ENCODE measurements at regions of chr9 and their contacts with region 1.

Region 1: GRCh38 chr9:2087500-2088313 is 72.6 kb downstream of the SMARCA2 start:
- DNase-seq: peak; percentile 65
- ATAC-seq: peak; percentile 78
- H3K4me3 ChIP-seq: no peak overlapping the region
- H3K4me3 Mint-ChIP-seq: no peak overlapping the region
- H3K27ac ChIP-seq: no peak overlapping the region
- H3K27ac Mint-ChIP-seq: no peak overlapping the region
- H3K4me1 ChIP-seq: no peaks in the 10 kb centered on the region
- H3K4me1 Mint-ChIP-seq: no peaks in the 10 kb centered on the region
- H3K27me3 ChIP-seq: no peaks in the 10 kb centered on the region
- H3K27me3 Mint-ChIP-seq: no peaks in the 10 kb centered on the region
- CTCF ChIP-seq: peak; percentile 87

Region 2: GRCh38 chr9:893843-894420 is 1193.8 kb before region 1 on chr9:
- CTCF ChIA-PET with region 1: no interaction called
- POLR2A ChIA-PET with region 1: no interaction called
- intact Hi-C with region 1: loop called (anchors 5 kb)
- DNase-seq: peak; percentile 76
- ATAC-seq: peak; percentile 95
- H3K4me3 ChIP-seq: no peak overlapping the region
- H3K4me3 Mint-ChIP-seq: no peak overlapping the region
- H3K27ac ChIP-seq: no peak overlapping the region
- H3K27ac Mint-ChIP-seq: peak overlapping the region; percentile 26
- H3K4me1 ChIP-seq: peaks cover 13 to 16% of the 10 kb centered on the region in 2 donors
- H3K4me1 Mint-ChIP-seq: peaks cover 15% of the 10 kb centered on the region
- H3K27me3 ChIP-seq: no peaks in the 10 kb centered on the region
- H3K27me3 Mint-ChIP-seq: peaks cover 19% of the 10 kb centered on the region
- CTCF ChIP-seq: peak; percentile 76

Region 3: GRCh38 chr9:1709345-1709744 is 378.4 kb before region 1 on chr9:
- CTCF ChIA-PET with region 1: interaction called, 16 read pairs
- POLR2A ChIA-PET with region 1: no interaction called
- intact Hi-C with region 1: no loop called
- DNase-seq: peak; percentile 21
- ATAC-seq: no peak
- H3K4me3 ChIP-seq: no peak overlapping the region
- H3K4me3 Mint-ChIP-seq: no peak overlapping the region
- H3K27ac ChIP-seq: no peak overlapping the region
- H3K27ac Mint-ChIP-seq: no peak overlapping the region
- H3K4me1 ChIP-seq: no peaks in the 10 kb centered on the region
- H3K4me1 Mint-ChIP-seq: no peaks in the 10 kb centered on the region
- H3K27me3 ChIP-seq: no peaks in the 10 kb centered on the region
- H3K27me3 Mint-ChIP-seq: peaks cover 13% of the 10 kb centered on the region
- CTCF ChIP-seq: peak; percentile 60

Region 4: GRCh38 chr9:1726993-1727759 is 360.5 kb before region 1 on chr9:
- CTCF ChIA-PET with region 1: interaction called, 12 read pairs
- POLR2A ChIA-PET with region 1: no interaction called
- intact Hi-C with region 1: loop called (anchors 5 kb)
- DNase-seq: peak; percentile 7
- ATAC-seq: no peak
- H3K4me3 ChIP-seq: no peak overlapping the region
- H3K4me3 Mint-ChIP-seq: no peak overlapping the region
- H3K27ac ChIP-seq: no peak overlapping the region
- H3K27ac Mint-ChIP-seq: no peak overlapping the region
- H3K4me1 ChIP-seq: no peaks in the 10 kb centered on the region
- H3K4me1 Mint-ChIP-seq: no peaks in the 10 kb centered on the region
- H3K27me3 ChIP-seq: peaks cover 0 to 4% (median 0%) of the 10 kb centered on the region in 4 experiments
- H3K27me3 Mint-ChIP-seq: peaks cover 12% of the 10 kb centered on the region
- CTCF ChIP-seq: peak; percentile 17

Region 5: GRCh38 chr9:1939926-1940368 is 147.8 kb before region 1 on chr9:
- CTCF ChIA-PET with region 1: interaction called, 12 read pairs
- POLR2A ChIA-PET with region 1: no interaction called
- intact Hi-C with region 1: loop called (anchors 10 kb)
- DNase-seq: peak; percentile 61
- ATAC-seq: peak; percentile 70
- H3K4me3 ChIP-seq: no peak overlapping the region
- H3K4me3 Mint-ChIP-seq: peak overlapping the region; percentile 7
- H3K27ac ChIP-seq: no peak overlapping the region
- H3K27ac Mint-ChIP-seq: no peak overlapping the region
- H3K4me1 ChIP-seq: peaks cover 7 to 13% of the 10 kb centered on the region in 2 donors
- H3K4me1 Mint-ChIP-seq: peaks cover 22% of the 10 kb centered on the region
- H3K27me3 ChIP-seq: no peaks in the 10 kb centered on the region
- H3K27me3 Mint-ChIP-seq: peaks cover 7% of the 10 kb centered on the region
- CTCF ChIP-seq: peak; percentile 79

Region 6: DNA sequence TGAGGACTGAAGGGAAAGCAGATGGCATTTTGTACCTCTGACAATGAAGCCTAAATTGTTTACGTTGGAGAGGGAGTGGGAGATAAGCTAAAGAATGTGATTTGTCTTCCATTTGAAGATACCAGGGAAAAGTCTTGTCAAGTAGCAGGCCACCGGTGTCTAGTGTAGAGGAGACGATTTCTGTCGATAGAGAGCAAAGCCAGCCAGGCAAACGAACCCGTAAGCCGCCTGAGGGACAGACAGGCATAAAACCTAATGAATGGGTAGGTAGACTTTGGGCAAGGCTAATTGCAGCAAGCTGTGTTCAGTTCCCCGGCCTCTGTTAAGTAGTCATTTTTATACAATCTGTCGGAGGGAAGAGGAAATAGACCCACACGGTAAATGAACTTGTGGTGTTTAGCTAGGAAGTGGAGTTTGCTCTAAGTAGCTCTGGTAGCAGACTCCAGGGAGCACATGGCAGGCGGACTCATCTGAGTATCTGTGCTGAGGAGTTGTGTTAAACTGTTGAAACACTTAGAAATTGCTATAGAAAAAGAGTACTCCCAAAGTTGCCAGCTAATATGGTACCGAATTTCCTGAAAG is 43.7 kb before region 1 on chr9:
- CTCF ChIA-PET with region 1: no interaction called
- POLR2A ChIA-PET with region 1: no interaction called
- intact Hi-C with region 1: no loop called
- DNase-seq: peak; percentile 48
- ATAC-seq: peak; percentile 66
- H3K4me3 ChIP-seq: peak overlapping the region in 3 of 5 experiments; percentile 4 to 30 (median 26)
- H3K4me3 Mint-ChIP-seq: peak overlapping the region; percentile 81
- H3K27ac ChIP-seq: peak overlapping the region; percentile 40 to 72
- H3K27ac Mint-ChIP-seq: peak overlapping the region; percentile 87
- H3K4me1 ChIP-seq: peaks cover 22 to 30% of the 10 kb centered on the region in 2 donors
- H3K4me1 Mint-ChIP-seq: peaks cover 37% of the 10 kb centered on the region
- H3K27me3 ChIP-seq: no peaks in the 10 kb centered on the region
- H3K27me3 Mint-ChIP-seq: no peaks in the 10 kb centered on the region
- CTCF ChIP-seq: no peak

Region 7: GRCh38 chr9:2066312-2067273 is 21.1 kb before region 1 on chr9:
- CTCF ChIA-PET with region 1: interaction called, 11 read pairs
- POLR2A ChIA-PET with region 1: no interaction called
- intact Hi-C with region 1: no loop called
- DNase-seq: peak; percentile 25
- ATAC-seq: no peak
- H3K4me3 ChIP-seq: no peak overlapping the region
- H3K4me3 Mint-ChIP-seq: no peak overlapping the region
- H3K27ac ChIP-seq: no peak overlapping the region
- H3K27ac Mint-ChIP-seq: peak overlapping the region; percentile 41
- H3K4me1 ChIP-seq: no peaks in the 10 kb centered on the region
- H3K4me1 Mint-ChIP-seq: no peaks in the 10 kb centered on the region
- H3K27me3 ChIP-seq: no peaks in the 10 kb centered on the region
- H3K27me3 Mint-ChIP-seq: no peaks in the 10 kb centered on the region
- CTCF ChIP-seq: peak; percentile 29

Region 8: DNA sequence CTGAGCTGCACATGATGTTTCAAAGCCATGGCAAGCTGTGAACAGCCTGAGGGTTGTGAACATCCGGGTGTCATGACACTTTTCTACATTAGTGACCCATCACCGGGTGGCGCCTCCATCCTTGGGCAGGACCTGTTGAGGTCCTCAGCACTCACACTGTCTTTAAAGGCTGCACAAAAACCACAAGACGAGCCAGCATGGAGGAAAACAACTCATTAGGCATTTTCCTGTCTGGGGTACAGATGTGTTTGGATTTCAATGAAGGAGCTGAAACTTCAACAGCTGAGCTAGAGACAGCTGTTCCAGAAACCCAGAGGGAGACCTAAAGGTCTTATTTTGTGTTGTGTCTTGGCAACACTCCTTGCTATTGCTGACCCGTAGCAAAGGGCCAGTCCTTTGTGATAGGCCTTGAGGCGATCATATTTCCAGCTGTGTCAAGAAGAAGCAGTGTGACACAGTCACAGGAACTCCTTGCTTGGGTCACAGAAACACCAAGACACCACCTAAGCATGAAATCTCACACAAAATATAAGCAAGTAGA is 382.0 kb after region 1 on chr9:
- CTCF ChIA-PET with region 1: no interaction called
- POLR2A ChIA-PET with region 1: no interaction called
- intact Hi-C with region 1: no loop called
- DNase-seq: no peak
- ATAC-seq: no peak
- H3K4me3 ChIP-seq: no peak overlapping the region
- H3K4me3 Mint-ChIP-seq: no peak overlapping the region
- H3K27ac ChIP-seq: no peak overlapping the region
- H3K27ac Mint-ChIP-seq: no peak overlapping the region
- H3K4me1 ChIP-seq: no peaks in the 10 kb centered on the region
- H3K4me1 Mint-ChIP-seq: no peaks in the 10 kb centered on the region
- H3K27me3 ChIP-seq: no peaks in the 10 kb centered on the region
- H3K27me3 Mint-ChIP-seq: peaks cover 7% of the 10 kb centered on the region
- CTCF ChIP-seq: no peak